ENCODE measurements at regions of chr19 and their contacts with region 1.

Region 1: DNA sequence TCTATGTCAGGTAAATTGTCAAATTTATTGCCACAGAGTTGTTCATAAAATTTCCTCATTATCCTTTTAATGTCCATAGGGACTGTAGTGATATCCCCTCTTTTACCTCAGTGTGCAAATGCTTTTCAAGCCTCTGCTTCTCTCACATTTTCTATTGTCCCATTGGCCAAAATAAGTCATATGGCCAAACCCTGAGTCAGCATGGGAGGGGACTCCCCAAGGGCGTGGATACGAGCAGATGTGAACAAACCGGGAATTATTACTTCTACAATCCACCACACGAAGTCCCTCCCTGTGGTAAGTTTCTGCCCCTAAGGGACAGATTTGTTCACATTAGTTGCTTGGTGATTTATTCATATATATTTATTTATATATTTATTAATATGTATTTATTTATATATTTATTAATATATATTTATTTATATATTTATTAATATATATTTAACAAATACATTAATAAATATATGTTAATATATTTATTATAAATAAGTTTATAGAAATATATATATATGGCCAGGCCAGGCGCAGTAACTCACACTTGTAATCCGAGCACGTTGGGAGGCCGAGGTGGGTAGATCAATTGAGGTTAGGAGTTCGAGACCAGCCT is 20.1 kb upstream of the CAMSAP3 start:
- DNase-seq: peak; percentile 38 to 69
- H3K4me3 ChIP-seq: no peak overlapping the region
- H3K27ac ChIP-seq: no peak overlapping the region
- H3K4me1 ChIP-seq: 0 out of 2 replicates have a peak, but pooled peaks cover 8% of the 10 kb centered on the region
- H3K27me3 ChIP-seq: peaks cover 25% of the 10 kb centered on the region; the same call in 1 of the 2 replicates
- CTCF ChIP-seq: no peak

Region 2: DNA sequence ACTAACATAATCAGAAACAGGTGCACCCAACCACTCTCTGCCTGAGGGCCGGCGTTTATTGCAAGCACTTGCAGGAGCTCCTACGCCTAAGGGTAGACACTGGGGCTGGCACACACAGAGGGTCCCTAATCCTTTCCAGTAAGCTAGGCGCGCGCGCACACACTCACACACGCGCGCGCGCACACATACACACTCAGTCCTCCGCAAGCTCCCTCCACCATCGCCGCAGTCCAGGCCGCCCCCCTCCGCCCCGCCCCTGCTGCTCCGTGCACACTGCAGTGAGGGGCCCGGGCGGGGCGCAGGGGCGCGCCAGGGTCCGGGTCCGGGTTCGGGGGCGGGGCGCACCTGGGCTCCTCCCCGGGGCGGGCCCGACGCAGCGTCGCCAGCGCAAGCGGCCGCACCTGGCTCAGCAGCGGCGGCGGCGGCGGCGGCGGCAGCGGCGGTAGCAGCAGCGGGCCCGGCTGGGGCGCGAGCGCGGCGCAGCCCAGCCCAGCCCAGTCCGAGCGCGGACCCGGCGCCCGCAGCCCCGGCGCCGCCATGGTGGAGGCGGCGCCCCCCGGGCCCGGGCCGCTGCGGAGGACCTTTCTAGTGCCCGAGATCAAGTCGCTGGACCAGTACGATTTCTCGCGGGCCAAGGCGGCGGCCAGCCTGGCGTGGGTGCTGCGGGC is 20.1 kb after region 1 on chr19 and contains the start of gene CAMSAP3:
- CTCF ChIA-PET with region 1: interaction called, 3 read pairs
- POLR2A ChIA-PET with region 1: interaction called, 10 read pairs
- intact Hi-C with region 1: no loop called
- DNase-seq: peak in 1 of 2 experiments; percentile 71
- H3K4me3 ChIP-seq: peak within 1 kb of the TSS; percentile 72
- H3K27ac ChIP-seq: no peak within 1 kb of the TSS
- H3K4me1 ChIP-seq: peaks cover 10% of the 10 kb centered on the region
- H3K27me3 ChIP-seq: no peaks in the 10 kb centered on the region
- CTCF ChIP-seq: no peak
- total RNA-seq, gene CAMSAP3: 25.9 and 27.8 TPM in 2 replicates